ENCODE measurements at regions of chr12 and their contacts with region 1.

Region 1: GRCh38 chr12:14138495-14138894 is 157.1 kb upstream of the GRIN2B start:
- DNase-seq: peak in 1 of 2 experiments; percentile 62
- H3K4me3 ChIP-seq: no peak overlapping the region
- H3K27ac ChIP-seq: no peak overlapping the region
- H3K4me1 ChIP-seq: no peaks in the 10 kb centered on the region
- H3K27me3 ChIP-seq: no peaks in the 10 kb centered on the region
- CTCF ChIP-seq: peak; percentile 73 to 84 (median 77)
- EP300 ChIP-seq: no peak
- POLR2A ChIP-seq: no peak
- RAD21 ChIP-seq: peak; percentile 63 to 72

Region 2: DNA sequence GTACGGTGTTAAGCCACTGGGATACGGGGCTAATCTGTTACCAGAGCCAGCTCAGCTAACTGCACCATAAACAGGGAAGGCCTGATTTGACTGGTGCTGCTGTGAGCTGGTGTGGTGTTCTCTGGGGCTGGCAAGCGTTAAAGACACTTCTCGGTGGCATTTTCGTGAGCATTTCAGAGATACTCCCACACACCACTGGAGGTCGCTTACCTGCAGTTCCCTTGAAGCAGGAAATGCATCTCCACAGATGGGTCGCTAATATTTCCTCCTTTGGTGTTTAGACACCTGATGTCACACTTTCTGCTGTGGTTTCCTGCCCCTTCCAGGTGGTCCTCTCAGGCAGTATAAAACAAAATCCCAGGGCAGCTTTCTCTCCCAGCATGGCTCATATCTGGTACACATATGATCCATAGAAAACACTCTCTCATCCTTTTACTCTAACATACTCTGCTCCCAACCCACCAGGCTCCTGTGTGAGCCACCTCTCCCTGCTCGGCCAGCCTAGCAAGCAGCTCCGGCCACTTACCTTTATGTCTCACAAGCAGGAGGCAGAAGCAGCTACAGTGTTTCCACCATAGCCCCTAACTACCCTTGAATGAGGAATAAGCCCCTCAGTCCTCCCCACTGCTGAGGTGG is 27.1 kb before region 1 on chr12:
- CTCF ChIA-PET with region 1: interaction called, 51 read pairs
- POLR2A ChIA-PET with region 1: no interaction called
- DNase-seq: peak in 1 of 2 experiments; percentile 49
- H3K4me3 ChIP-seq: no peak overlapping the region
- H3K27ac ChIP-seq: no peak overlapping the region
- H3K4me1 ChIP-seq: no peaks in the 10 kb centered on the region
- H3K27me3 ChIP-seq: no peaks in the 10 kb centered on the region
- CTCF ChIP-seq: peak; percentile 60 to 82 (median 62)
- EP300 ChIP-seq: no peak
- POLR2A ChIP-seq: no peak
- RAD21 ChIP-seq: peak; percentile 51 to 63

Region 3: DNA sequence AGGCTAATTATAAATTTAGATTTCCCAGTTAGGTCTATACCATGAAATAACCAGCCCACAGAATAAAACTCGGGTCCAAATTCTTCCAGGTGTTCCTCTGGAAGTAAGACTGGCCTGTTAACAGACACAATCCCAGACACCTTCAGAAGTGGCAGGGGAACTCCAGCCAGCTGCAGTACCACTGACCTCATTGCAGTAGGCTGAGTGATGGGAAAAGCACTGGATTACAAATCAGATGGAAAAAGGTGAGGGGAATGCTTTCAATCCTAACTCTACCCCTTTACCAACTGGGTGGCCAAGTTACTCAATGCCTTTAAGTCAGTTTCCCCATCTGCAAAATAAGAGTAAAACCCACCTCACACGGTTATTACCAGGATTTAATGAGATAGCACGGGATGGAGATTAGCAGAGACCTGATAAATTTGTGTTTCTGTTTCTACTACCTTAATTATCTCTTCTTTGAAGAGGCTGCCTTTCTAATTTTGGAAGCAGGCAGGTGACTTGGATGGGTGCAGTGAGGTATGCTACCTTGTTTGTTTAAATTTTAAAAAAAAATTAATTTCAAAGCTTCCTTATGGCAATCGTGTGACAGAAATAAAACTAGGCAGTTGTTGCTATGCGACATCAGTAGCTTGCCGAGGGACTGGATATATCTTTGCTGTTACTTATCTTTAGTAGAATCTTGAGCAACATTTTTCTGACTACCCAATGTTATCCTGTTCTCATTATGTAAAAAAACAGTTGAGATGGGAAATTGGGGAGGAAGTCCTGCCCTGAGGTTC is 10.2 kb after region 1 on chr12:
- CTCF ChIA-PET with region 1: interaction called, 34 read pairs
- POLR2A ChIA-PET with region 1: no interaction called
- DNase-seq: no peak
- H3K4me3 ChIP-seq: no peak overlapping the region
- H3K27ac ChIP-seq: no peak overlapping the region
- H3K4me1 ChIP-seq: peaks cover 0 to 7% (median 2%) of the 10 kb centered on the region in 4 experiments; a peak in 2 of 7 replicates
- H3K27me3 ChIP-seq: no peaks in the 10 kb centered on the region
- CTCF ChIP-seq: no peak
- EP300 ChIP-seq: no peak
- POLR2A ChIP-seq: no peak
- RAD21 ChIP-seq: no peak

Region 4: DNA sequence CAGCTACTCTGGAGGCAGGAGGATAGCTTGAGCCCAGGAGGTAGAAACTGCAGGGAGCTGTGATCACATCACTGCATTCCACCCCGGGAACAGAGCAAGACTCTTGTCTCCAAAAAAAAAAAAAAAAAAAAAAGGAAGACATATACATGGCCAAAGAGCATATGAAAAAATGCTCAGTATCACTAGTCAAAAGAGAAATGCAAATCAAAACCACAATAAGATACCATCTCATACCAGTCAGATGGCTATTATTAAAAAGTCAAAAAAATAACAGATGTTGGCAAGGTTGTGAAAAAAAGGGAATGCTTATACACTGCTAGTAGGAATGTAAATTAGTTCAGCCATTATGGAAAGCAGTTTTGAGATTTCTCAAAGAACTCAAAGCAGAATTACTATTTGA is 52.2 kb after region 1 on chr12:
- CTCF ChIA-PET with region 1: no interaction called
- POLR2A ChIA-PET with region 1: no interaction called
- DNase-seq: no peak
- H3K4me3 ChIP-seq: no peak overlapping the region
- H3K27ac ChIP-seq: no peak overlapping the region
- H3K4me1 ChIP-seq: peaks cover 0 to 6% (median 4%) of the 10 kb centered on the region in 4 experiments; a peak in 4 of 7 replicates
- H3K27me3 ChIP-seq: no peaks in the 10 kb centered on the region
- CTCF ChIP-seq: no peak
- EP300 ChIP-seq: no peak
- POLR2A ChIP-seq: no peak
- RAD21 ChIP-seq: no peak

Measured in H1 (cell line).